ENCODE measurements at regions of chrX and their contacts with region 1.

Region 1: DNA sequence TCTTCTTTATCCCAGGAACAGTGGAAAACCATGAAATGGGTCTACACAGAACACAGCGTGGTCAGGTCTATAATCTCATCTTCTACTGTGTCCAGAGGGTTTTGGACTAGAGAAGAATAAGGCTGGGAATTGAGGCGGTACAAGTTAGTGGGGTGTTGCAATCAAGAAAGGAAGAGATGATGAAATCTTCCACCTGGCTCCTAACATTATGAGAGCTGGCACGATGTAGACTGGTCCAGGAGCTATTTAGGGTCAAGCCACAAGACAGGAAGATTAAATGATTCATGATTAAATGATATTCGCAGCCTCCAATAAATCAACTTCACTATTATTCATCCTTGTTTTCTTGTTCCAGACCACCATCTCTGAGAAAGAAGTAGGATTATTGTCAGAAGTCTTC is 88.0 kb downstream of the ARSF start:
- DNase-seq: peak; percentile 28
- ATAC-seq: no peak
- H3K4me3 ChIP-seq: no peak overlapping the region
- H3K27ac ChIP-seq: no peak overlapping the region; the same call in 1 of the 2 replicates
- H3K4me1 ChIP-seq: peaks cover 4% of the 10 kb centered on the region; the same call in 1 of the 2 replicates
- H3K27me3 ChIP-seq: no peaks in the 10 kb centered on the region
- CTCF ChIP-seq: no peak
- POLR2A ChIP-seq: no peak
- RAD21 ChIP-seq: no peak

Region 2: GRCh38 chrX:2894885-2895292 is 234.4 kb before region 1 on chrX:
- CTCF ChIA-PET with region 1: no interaction called
- POLR2A ChIA-PET with region 1: no interaction called
- dilution Hi-C with region 1: no loop called
- in situ Hi-C with region 1: no loop called
- intact Hi-C with region 1: no loop called
- DNase-seq: peak; percentile 50
- ATAC-seq: no peak; the same call in 1 of the 2 replicates
- H3K4me3 ChIP-seq: no peak overlapping the region
- H3K27ac ChIP-seq: no peak overlapping the region
- H3K4me1 ChIP-seq: peaks cover 8% of the 10 kb centered on the region; the same call in 1 of the 2 replicates
- H3K27me3 ChIP-seq: no peaks in the 10 kb centered on the region
- CTCF ChIP-seq: no peak
- POLR2A ChIP-seq: no peak
- RAD21 ChIP-seq: no peak

Region 3: DNA sequence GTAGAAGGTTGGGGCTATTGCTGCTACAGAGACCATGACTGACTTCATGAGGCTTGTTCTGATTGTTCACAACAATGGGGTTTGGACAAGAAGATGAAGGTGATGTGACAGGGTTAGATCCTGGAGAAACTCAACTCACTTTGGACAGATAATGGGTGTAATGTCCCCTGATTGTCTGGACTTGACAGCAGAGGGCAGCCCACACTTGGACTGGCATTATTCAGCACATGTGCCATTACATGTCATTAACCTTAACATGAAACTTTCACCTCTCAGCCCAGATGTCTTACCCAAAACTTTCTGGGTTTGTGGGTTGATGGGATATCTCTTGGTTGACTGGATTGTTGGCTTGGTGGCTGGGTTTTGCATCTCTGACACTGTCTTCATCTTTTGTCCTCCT is 115.7 kb after region 1 on chrX:
- CTCF ChIA-PET with region 1: no interaction called
- POLR2A ChIA-PET with region 1: no interaction called
- dilution Hi-C with region 1: no loop called
- in situ Hi-C with region 1: no loop called
- intact Hi-C with region 1: no loop called
- DNase-seq: no peak
- ATAC-seq: no peak
- H3K4me3 ChIP-seq: no peak overlapping the region
- H3K27ac ChIP-seq: peak overlapping the region; percentile 78
- H3K4me1 ChIP-seq: peaks cover 12% of the 10 kb centered on the region
- H3K27me3 ChIP-seq: no peaks in the 10 kb centered on the region
- CTCF ChIP-seq: no peak
- POLR2A ChIP-seq: no peak
- RAD21 ChIP-seq: no peak

Region 4: GRCh38 chrX:3811331-3812311 is 682.4 kb after region 1 on chrX:
- CTCF ChIA-PET with region 1: no interaction called
- POLR2A ChIA-PET with region 1: no interaction called
- dilution Hi-C with region 1: no loop called
- in situ Hi-C with region 1: no loop called
- intact Hi-C with region 1: loop called (anchors 5 kb)
- DNase-seq: peak; percentile 58
- ATAC-seq: no peak
- H3K4me3 ChIP-seq: no peak overlapping the region
- H3K27ac ChIP-seq: no peak overlapping the region
- H3K4me1 ChIP-seq: no peaks in the 10 kb centered on the region
- H3K27me3 ChIP-seq: peaks cover 12% of the 10 kb centered on the region
- CTCF ChIP-seq: peak; percentile 69
- POLR2A ChIP-seq: no peak
- RAD21 ChIP-seq: peak; percentile 66